Upper lobe of right lung (tissue), 1 donor: ENCODE measurements at regions of chr3 and their contacts with region 1.

Region 1: DNA sequence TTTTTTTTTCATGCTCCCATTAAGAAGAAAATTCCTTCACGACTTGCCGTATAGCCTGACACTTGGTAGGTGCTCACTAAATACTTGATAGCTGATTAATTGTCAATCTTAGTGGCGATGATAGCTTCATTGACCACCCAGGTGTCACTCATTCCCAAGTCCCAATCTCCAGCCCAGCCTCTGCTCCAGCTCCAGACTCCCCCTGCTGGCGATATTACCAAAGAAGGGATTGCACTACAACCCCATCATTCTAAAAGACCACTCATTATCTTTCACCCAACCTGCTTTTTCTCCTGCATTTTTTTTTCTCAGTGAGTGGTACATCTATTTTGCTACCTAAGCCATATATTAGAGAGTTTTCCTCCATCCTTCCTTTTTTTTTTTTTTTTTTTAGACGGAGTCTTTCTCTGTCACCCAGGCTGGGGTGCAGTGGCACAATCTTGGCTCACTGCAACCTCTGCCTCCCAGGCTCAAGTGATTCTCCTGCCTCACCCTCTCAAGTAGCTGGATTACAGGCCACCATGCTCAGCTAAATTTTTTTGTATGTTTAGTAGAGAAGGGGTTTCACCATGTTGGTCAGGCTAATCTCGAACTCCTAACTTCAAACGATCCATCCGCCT is 19.5 kb upstream of the COMMD2 start:
- DNase-seq: no peak
- ATAC-seq: peak; percentile 83
- H3K4me3 ChIP-seq: no peak overlapping the region
- H3K27ac ChIP-seq: no peak overlapping the region
- H3K4me1 ChIP-seq: no peaks in the 10 kb centered on the region
- H3K27me3 ChIP-seq: no peaks in the 10 kb centered on the region
- CTCF ChIP-seq: peak; percentile 83

Region 2: DNA sequence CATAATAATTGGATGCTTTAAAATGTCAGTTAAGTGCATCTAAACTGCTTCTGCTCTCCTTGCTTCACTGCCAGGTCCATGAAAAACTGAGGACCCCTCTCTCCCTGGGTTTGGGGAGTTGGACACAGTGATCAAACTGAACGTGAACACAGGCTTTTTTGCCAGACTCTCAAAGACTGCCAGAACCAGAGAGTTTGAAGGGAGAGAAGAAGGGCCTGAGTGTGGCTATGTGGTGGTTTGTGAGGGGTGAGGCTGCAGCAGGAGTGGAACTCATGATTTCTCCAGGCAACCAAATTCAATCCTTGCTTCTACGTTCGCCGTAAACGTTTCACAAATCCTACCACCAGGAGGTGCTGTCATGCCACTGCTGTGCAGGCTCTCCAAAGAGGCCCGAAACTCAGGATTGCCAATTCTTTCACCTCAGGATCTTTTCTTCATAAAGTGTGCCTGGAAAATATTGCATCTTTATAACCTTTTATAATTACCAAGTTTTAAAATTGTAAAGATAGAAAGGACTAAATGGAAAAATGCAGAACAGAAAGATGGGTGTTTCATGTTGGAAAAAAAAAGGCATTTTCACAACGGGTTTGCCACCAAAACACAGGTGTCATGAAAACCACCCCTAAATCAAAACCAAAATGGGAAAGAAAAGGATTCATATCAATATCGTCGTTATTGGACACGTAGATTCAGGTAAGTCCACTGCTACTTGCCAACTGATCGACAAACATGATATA is 277.6 kb before region 1 on chr3:
- intact Hi-C with region 1: loop called (anchors 10 kb)
- DNase-seq: peak; percentile 73
- ATAC-seq: peak; percentile 90
- H3K4me3 ChIP-seq: no peak overlapping the region
- H3K27ac ChIP-seq: no peak overlapping the region
- H3K4me1 ChIP-seq: no peaks in the 10 kb centered on the region
- H3K27me3 ChIP-seq: no peaks in the 10 kb centered on the region
- CTCF ChIP-seq: peak; percentile 84